ENCODE measurements at regions of chr14 and their contacts with region 1.

Region 1: GRCh38 chr14:21395444-21395843 is 11.6 kb upstream of the SUPT16H start:
- DNase-seq: no peak

Region 2: GRCh38 chr14:21203470-21204166 is 191.8 kb before region 1 on chr14:
- CTCF ChIA-PET with region 1: no interaction called
- POLR2A ChIA-PET with region 1: no interaction called
- DNase-seq: no peak

Region 3: DNA sequence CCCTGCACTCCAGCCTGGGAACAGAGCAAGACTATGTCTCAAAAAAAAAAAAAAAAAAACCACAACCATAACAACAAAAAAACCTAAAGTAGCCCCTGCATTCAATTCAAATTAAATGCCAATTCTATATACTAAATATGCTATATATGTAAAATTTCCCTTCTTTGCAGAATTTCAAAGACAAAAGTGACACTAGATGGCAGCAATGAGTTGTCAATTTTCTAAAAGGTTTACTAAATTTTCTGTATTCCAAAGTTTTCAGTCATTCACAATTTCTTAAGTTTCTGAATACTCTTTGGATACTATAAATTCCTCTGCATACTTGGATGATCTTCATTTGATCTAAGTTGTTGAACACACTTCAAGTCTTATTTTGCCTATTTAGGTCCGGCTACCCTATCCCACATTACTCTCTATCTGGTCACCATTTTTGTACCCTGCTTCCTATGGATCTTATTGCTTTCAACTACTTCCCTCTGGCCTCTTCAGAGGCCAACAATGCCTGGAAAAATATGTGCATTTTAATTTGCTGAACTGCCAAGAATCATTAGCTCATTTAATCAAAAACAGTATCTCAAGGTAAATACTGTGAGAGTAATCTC is 154.1 kb before region 1 on chr14:
- CTCF ChIA-PET with region 1: no interaction called
- POLR2A ChIA-PET with region 1: no interaction called
- DNase-seq: no peak

Region 4: GRCh38 chr14:21257394-21257909 is 138.0 kb before region 1 on chr14:
- CTCF ChIA-PET with region 1: no interaction called
- POLR2A ChIA-PET with region 1: no interaction called
- DNase-seq: no peak

Region 5: GRCh38 chr14:21383848-21384493 is 11.5 kb before region 1 on chr14 and contains the start of gene SUPT16H:
- CTCF ChIA-PET with region 1: no interaction called
- POLR2A ChIA-PET with region 1: interaction called, 10 read pairs
- DNase-seq: peak; percentile 91